SK-N-SH (cell line): ENCODE measurements at regions of chr4 and their contacts with region 1.

Region 1: GRCh38 chr4:15805583-15806517 is 27.7 kb downstream of the CD38 start:
- DNase-seq: peak; percentile 39
- H3K4me3 ChIP-seq: no peak overlapping the region; a peak in 1 of 4 replicates
- H3K27ac ChIP-seq: no peak overlapping the region
- H3K4me1 ChIP-seq: no peaks in the 10 kb centered on the region
- H3K27me3 ChIP-seq: no peaks in the 10 kb centered on the region; the same call in 1 of the 2 replicates
- CTCF ChIP-seq: peak; percentile 88
- EP300 ChIP-seq: no peak
- RAD21 ChIP-seq: peak; percentile 92

Region 2: GRCh38 chr4:15677507-15677988 is 128.3 kb before region 1 on chr4:
- CTCF ChIA-PET with region 1: no interaction called
- POLR2A ChIA-PET with region 1: no interaction called
- DNase-seq: no peak
- H3K4me3 ChIP-seq: no peak overlapping the region
- H3K27ac ChIP-seq: peak overlapping the region in 1 of 2 experiments; percentile 14; a peak in 1 of 4 replicates
- H3K4me1 ChIP-seq: peaks cover 7 to 24% of the 10 kb centered on the region in 2 experiments; a peak in 3 of 4 replicates
- H3K27me3 ChIP-seq: no peaks in the 10 kb centered on the region
- CTCF ChIP-seq: no peak
- EP300 ChIP-seq: no peak
- RAD21 ChIP-seq: no peak

Region 3: DNA sequence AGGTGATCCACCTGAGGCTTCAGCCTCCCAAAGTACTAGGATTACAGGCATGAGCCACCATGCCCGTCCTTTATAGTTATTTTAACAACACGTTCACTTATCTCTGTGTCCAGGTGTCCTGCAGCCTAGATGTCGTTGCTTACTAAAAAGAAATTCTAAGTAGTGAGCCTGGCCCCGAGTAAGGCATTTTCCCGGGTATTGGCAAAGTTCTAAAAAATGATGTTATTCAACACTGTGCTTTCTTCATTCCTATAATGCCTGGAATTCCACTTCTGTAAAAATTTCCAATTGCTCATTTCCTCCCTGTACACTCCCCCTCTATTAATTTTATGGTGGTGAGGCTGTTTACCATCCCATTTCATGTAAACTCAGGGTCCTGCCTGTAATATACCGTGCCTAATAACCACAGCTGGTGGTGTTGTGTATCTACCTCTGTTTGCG is 88.8 kb before region 1 on chr4:
- CTCF ChIA-PET with region 1: interaction called, 14 read pairs
- POLR2A ChIA-PET with region 1: no interaction called
- DNase-seq: no peak
- H3K4me3 ChIP-seq: no peak overlapping the region; a peak in 1 of 4 replicates
- H3K27ac ChIP-seq: no peak overlapping the region
- H3K4me1 ChIP-seq: peaks cover 0 to 13% of the 10 kb centered on the region in 2 experiments; a peak in 2 of 4 replicates
- H3K27me3 ChIP-seq: no peaks in the 10 kb centered on the region
- CTCF ChIP-seq: no peak
- EP300 ChIP-seq: no peak
- RAD21 ChIP-seq: no peak

Region 4: GRCh38 chr4:15794905-15795304 is 10.9 kb before region 1 on chr4:
- CTCF ChIA-PET with region 1: interaction called, 31 read pairs
- POLR2A ChIA-PET with region 1: no interaction called
- DNase-seq: no peak
- H3K4me3 ChIP-seq: no peak overlapping the region
- H3K27ac ChIP-seq: peak overlapping the region in 1 of 2 experiments; percentile 87; a peak in 1 of 4 replicates
- H3K4me1 ChIP-seq: peaks cover 3 to 5% of the 10 kb centered on the region in 2 experiments; a peak in 3 of 4 replicates
- H3K27me3 ChIP-seq: peaks cover 8% of the 10 kb centered on the region; the same call in 1 of the 2 replicates
- CTCF ChIP-seq: no peak
- EP300 ChIP-seq: no peak
- RAD21 ChIP-seq: no peak

Region 5: DNA sequence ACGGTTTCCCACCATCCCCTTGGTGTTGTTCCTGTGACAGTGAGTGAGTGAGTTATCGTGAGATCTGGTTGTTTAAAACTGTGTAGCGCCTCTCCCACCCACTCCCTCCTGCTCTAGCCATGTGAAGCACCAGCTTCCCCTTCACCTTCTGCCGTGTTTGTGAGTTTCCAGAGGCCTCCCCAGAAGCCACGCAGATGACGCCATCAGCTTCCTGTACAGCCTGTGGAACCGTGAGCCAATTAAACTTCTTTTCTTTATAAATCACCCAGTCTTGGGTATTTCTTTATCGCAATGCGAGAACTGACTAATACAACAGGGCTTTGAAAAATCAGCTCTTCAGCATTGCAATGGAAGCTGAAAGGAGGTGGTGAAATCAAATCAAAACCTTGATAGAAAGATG is 82.7 kb after region 1 on chr4:
- CTCF ChIA-PET with region 1: interaction called, 133 read pairs
- POLR2A ChIA-PET with region 1: no interaction called
- DNase-seq: no peak
- H3K4me3 ChIP-seq: no peak overlapping the region
- H3K27ac ChIP-seq: no peak overlapping the region
- H3K4me1 ChIP-seq: peaks cover 0 to 3% of the 10 kb centered on the region in 2 experiments; a peak in 1 of 4 replicates
- H3K27me3 ChIP-seq: no peaks in the 10 kb centered on the region
- CTCF ChIP-seq: no peak
- EP300 ChIP-seq: no peak
- RAD21 ChIP-seq: no peak

Region 6: DNA sequence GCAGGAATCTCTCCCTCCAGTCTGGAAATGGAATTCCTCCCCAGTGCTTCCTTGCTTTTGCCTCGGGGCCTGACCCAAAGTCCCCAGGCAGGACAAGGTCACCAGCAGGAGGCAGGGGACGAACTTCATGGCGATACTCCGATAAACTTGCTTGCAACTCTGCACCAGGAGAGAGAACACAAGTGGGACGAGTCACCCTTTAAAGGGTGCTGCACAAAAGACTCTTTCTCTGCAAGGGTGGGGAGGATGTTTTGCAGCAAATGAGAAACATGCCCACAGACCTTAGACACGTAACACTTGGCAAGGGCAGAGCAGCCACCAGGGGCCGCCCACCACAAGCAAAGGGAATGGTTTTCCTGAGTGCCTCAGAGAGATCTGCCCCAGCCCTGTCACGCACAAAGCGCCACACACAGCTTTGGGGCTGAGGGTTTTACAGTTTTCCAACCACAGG is 157.2 kb after region 1 on chr4 and contains the start of gene FGFBP2:
- CTCF ChIA-PET with region 1: interaction called, 28 read pairs
- POLR2A ChIA-PET with region 1: no interaction called
- DNase-seq: peak; percentile 75
- H3K4me3 ChIP-seq: no peak within 1 kb of the TSS; a peak in 1 of 4 replicates
- H3K27ac ChIP-seq: no peak within 1 kb of the TSS
- H3K4me1 ChIP-seq: peaks cover 0 to 9% of the 10 kb centered on the region in 2 experiments; a peak in 1 of 4 replicates
- H3K27me3 ChIP-seq: no peaks in the 10 kb centered on the region
- CTCF ChIP-seq: peak; percentile 62
- EP300 ChIP-seq: no peak
- RAD21 ChIP-seq: peak; percentile 79
- polyA plus RNA-seq, gene FGFBP2: 0.62 and 1.7 TPM in 2 replicates

Region 7: GRCh38 chr4:16183604-16184003 is 377.8 kb after region 1 on chr4:
- CTCF ChIA-PET with region 1: no interaction called
- POLR2A ChIA-PET with region 1: no interaction called
- DNase-seq: no peak
- H3K4me3 ChIP-seq: no peak overlapping the region
- H3K27ac ChIP-seq: no peak overlapping the region
- H3K4me1 ChIP-seq: peaks cover 0 to 9% of the 10 kb centered on the region in 2 experiments; a peak in 1 of 4 replicates
- H3K27me3 ChIP-seq: no peaks in the 10 kb centered on the region
- CTCF ChIP-seq: no peak
- EP300 ChIP-seq: no peak
- RAD21 ChIP-seq: no peak

Region 8: GRCh38 chr4:17613761-17614415 is 1808.0 kb after region 1 on chr4:
- CTCF ChIA-PET with region 1: no interaction called
- POLR2A ChIA-PET with region 1: no interaction called
- DNase-seq: no peak
- H3K4me3 ChIP-seq: peak overlapping the region; percentile 78 to 80
- H3K27ac ChIP-seq: peak overlapping the region; percentile 70 to 81
- H3K4me1 ChIP-seq: peaks cover 0 to 6% of the 10 kb centered on the region in 2 experiments; a peak in 1 of 4 replicates
- H3K27me3 ChIP-seq: no peaks in the 10 kb centered on the region
- CTCF ChIP-seq: no peak
- EP300 ChIP-seq: no peak
- RAD21 ChIP-seq: no peak